ENCODE measurements at regions of chr20 and their contacts with region 1.

Region 1: DNA sequence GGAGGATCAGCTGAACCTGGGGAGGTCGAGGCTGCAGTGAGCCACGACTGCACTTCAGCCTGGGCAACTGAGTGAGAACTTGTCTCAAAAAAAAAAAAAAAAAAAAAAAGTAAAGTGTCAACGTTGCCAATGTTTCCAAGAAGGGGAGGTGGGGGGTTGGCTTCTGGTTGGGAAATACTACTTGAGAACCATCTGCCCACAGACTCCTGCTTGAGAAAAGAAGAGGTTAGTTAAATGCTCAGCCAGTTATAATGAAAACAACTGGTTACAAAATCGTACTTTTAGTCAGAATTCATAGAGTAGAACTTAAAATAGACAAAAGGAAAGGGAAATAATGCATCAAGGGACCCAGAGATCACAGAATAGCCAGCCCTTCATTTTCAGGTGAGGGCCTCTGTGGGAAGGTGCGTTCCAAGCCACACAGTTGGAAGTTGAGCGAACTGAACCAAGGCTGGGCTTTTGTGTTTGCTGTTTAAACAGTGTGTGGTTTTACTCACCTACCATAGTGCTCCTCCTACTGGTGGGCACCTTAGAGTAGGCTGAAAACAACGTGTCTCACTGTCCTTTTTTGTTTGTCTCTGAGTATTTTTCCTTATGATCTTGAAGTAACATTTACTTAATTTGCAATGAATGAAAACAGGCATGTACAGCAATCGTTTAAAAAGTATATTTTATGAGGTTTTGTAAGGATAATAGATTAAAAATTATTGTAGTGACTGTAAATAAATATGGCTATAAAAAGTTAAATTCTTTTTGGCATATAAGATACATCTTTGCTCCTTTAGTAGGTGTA is 200.7 kb downstream of the BCAS1 start:
- DNase-seq: peak; percentile 27
- ATAC-seq: peak; percentile 80
- H3K4me3 Mint-ChIP-seq: peak overlapping the region; percentile 60
- H3K27ac Mint-ChIP-seq: peak overlapping the region; percentile 85
- H3K4me1 Mint-ChIP-seq: peaks cover 71% of the 10 kb centered on the region
- H3K27me3 Mint-ChIP-seq: no peaks in the 10 kb centered on the region
- CTCF ChIP-seq: no peak

Region 2: DNA sequence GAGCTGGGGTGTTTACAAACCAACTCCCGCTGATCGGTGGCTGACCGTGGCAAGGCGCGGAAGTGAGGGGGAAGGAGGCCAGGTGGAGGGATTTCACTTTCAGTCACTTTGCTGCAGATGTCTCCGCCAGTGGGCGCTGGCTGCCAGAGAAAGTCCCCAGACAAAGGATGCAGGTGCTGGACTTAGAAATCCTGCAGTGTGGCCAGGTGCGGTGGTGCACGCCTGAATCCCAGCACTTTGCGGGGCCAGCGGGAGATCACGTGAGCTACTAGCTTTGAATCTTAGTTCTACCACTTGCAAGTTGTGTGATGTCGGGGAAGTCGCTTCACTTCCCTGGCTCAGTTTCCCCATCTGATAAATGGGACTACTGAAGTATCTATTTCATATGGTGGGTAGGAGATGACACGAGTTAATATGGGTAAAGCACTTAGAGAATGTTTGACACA is 456.5 kb before region 1 on chr20:
- CTCF ChIA-PET with region 1: no interaction called
- POLR2A ChIA-PET with region 1: no interaction called
- intact Hi-C with region 1: loop called (anchors 1 kb)
- DNase-seq: peak; percentile 43
- ATAC-seq: peak; percentile 70
- H3K4me3 Mint-ChIP-seq: peak overlapping the region; percentile 58
- H3K27ac Mint-ChIP-seq: no peak overlapping the region
- H3K4me1 Mint-ChIP-seq: peaks cover 6% of the 10 kb centered on the region
- H3K27me3 Mint-ChIP-seq: peaks cover 2% of the 10 kb centered on the region
- CTCF ChIP-seq: no peak

Region 3: DNA sequence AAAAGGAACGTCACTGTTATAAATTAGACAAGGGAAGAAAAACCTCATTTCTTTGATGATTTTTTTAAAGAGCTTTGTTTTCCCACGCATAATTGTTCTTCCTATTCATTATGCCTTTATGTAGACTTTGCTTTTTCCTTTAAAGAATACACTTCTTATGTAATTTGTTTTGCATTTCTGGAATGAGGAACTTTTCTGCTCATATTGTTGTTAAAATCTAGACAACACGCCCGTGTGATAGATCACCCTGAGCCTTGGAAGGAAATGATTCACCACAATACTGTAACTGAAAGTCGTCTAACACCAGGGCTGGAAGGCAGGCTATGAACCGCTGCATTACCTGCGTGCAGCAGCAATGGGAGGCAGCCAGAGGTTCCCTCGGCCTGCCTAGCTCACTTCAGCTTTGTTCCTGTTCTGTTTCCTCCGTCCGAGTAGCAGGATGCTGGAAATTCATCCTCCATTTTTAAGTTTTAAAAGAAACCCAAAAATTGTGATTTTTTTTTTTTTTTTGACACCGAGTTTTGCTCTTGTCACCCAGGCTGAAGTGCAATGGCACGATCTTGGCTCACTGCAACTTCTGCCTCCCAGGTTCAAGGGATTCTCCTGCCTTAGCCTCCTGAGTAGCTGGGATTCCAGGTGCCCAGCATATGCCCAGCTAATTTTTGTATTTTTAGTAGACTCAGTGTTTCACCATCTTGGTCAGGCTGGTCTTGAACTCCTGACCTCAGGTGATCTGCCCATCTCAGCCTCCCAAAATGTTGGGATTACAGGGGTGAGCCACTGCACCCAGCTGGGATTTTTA is 226.4 kb before region 1 on chr20:
- CTCF ChIA-PET with region 1: no interaction called
- POLR2A ChIA-PET with region 1: no interaction called
- intact Hi-C with region 1: loop called (anchors 5 kb)
- DNase-seq: no peak
- ATAC-seq: peak; percentile 94
- H3K4me3 Mint-ChIP-seq: peak overlapping the region; percentile 78
- H3K27ac Mint-ChIP-seq: peak overlapping the region; percentile 94
- H3K4me1 Mint-ChIP-seq: peaks cover 36% of the 10 kb centered on the region
- H3K27me3 Mint-ChIP-seq: no peaks in the 10 kb centered on the region
- CTCF ChIP-seq: no peak

Region 4: DNA sequence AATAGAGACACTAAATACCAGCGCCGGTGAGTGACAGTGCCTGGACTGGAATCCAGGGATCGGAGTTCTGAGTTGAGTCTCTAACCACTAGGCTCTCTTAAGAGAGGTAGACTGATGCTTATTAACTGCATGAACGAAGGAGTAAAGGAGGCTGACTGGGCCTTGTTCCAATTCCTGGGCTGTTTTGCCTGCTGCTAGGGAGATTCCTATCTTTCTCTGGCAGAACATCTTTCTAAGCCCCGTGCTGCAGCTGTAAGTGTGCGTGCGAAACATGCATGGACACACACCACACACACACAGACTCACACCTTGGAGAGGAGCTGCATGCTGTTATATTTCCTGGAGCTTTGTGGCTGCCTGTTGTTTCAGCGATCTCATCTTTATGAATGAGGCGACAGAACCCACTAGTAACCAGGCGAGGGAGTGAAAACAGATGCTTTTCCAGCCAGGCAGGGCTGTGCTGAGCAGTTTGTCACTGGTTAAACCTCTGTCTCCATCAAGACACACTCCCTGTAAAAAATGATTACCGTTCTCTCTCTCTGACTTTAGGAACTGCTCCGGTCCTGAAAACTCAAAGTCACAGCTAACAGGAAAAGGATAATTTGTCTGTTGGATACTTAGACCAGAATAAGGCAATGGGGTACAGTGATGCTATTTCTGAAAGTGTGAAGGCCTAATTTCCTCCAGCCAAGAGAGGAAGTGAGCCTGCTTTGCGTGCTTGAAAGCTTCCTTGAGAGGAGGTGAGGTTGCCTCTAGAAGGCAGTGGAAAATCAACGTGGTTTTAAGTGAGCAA is 118.6 kb before region 1 on chr20:
- CTCF ChIA-PET with region 1: interaction called, 3 read pairs
- POLR2A ChIA-PET with region 1: interaction called, 3 read pairs
- intact Hi-C with region 1: loop called (anchors 1 kb)
- DNase-seq: no peak
- ATAC-seq: peak; percentile 87
- H3K4me3 Mint-ChIP-seq: peak overlapping the region; percentile 45
- H3K27ac Mint-ChIP-seq: peak overlapping the region; percentile 95
- H3K4me1 Mint-ChIP-seq: peaks cover 64% of the 10 kb centered on the region
- H3K27me3 Mint-ChIP-seq: no peaks in the 10 kb centered on the region
- CTCF ChIP-seq: no peak

Region 5: GRCh38 chr20:53839423-53840176 is 30.1 kb before region 1 on chr20:
- CTCF ChIA-PET with region 1: interaction called, 3 read pairs
- POLR2A ChIA-PET with region 1: interaction called, 7 read pairs
- intact Hi-C with region 1: loop called (anchors 2 kb)
- DNase-seq: peak; percentile 42
- ATAC-seq: peak; percentile 75
- H3K4me3 Mint-ChIP-seq: peak overlapping the region; percentile 57
- H3K27ac Mint-ChIP-seq: peak overlapping the region; percentile 89
- H3K4me1 Mint-ChIP-seq: peaks cover 75% of the 10 kb centered on the region
- H3K27me3 Mint-ChIP-seq: no peaks in the 10 kb centered on the region
- CTCF ChIP-seq: no peak

Region 6: GRCh38 chr20:53891306-53891944 is 21.8 kb after region 1 on chr20:
- CTCF ChIA-PET with region 1: interaction called, 5 read pairs
- POLR2A ChIA-PET with region 1: interaction called, 14 read pairs
- intact Hi-C with region 1: loop called (anchors 1 kb)
- DNase-seq: no peak
- ATAC-seq: no peak
- H3K4me3 Mint-ChIP-seq: no peak overlapping the region
- H3K27ac Mint-ChIP-seq: peak overlapping the region; percentile 9
- H3K4me1 Mint-ChIP-seq: peaks cover 38% of the 10 kb centered on the region
- H3K27me3 Mint-ChIP-seq: no peaks in the 10 kb centered on the region
- CTCF ChIP-seq: no peak

Region 7: GRCh38 chr20:54103067-54103761 is 233.6 kb after region 1 on chr20:
- CTCF ChIA-PET with region 1: no interaction called
- POLR2A ChIA-PET with region 1: no interaction called
- intact Hi-C with region 1: no loop called
- DNase-seq: peak; percentile 46
- ATAC-seq: peak; percentile 62
- H3K4me3 Mint-ChIP-seq: no peak overlapping the region
- H3K27ac Mint-ChIP-seq: no peak overlapping the region
- H3K4me1 Mint-ChIP-seq: peaks cover 2% of the 10 kb centered on the region
- H3K27me3 Mint-ChIP-seq: peaks cover 8% of the 10 kb centered on the region
- CTCF ChIP-seq: no peak

Measured in activated B cell treated with CpG ODN at 0.5 μM for 24 hours (primary cell).